Transverse colon (tissue), 4 donors: ENCODE measurements at regions of chr3 and their contacts with region 1.

Region 1: DNA sequence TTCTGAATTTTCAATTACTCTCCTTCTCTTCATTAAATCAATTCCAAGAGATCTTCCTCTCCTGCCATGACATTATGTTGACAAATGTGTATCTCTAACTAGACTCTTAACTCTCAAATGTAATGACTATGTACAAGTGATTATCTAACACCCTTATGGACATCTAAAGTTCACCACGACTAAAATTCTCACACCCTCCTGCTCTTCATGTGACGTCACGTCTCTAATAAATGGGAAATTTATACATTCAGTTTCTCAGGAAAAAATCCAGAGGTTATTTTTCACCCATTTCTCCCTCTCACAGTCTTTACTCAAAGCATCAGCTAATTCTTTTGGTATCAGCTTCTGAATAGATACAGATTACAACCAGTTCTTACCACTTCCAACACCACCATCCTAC is 237.5 kb upstream of the EPHA6 start:
- DNase-seq: no peak
- H3K4me3 ChIP-seq: no peak overlapping the region
- H3K27ac ChIP-seq: no peak overlapping the region
- H3K4me1 ChIP-seq: no peaks in the 10 kb centered on the region
- H3K27me3 ChIP-seq: no peaks in the 10 kb centered on the region
- CTCF ChIP-seq: no peak
- EP300 ChIP-seq: no peak
- POLR2A ChIP-seq: no peak

Region 2: GRCh38 chr3:96354742-96355141 is 222.2 kb before region 1 on chr3:
- in situ Hi-C with region 1: no loop called
- intact Hi-C with region 1: loop called (anchors 10 kb)
- DNase-seq: no peak
- H3K4me3 ChIP-seq: no peak overlapping the region
- H3K27ac ChIP-seq: no peak overlapping the region
- H3K4me1 ChIP-seq: no peaks in the 10 kb centered on the region
- H3K27me3 ChIP-seq: no peaks in the 10 kb centered on the region
- CTCF ChIP-seq: no peak
- EP300 ChIP-seq: no peak
- POLR2A ChIP-seq: no peak